Cardiac septum (tissue), 1 donor: ENCODE measurements at regions of chr3 and their contacts with region 1.

Region 1: DNA sequence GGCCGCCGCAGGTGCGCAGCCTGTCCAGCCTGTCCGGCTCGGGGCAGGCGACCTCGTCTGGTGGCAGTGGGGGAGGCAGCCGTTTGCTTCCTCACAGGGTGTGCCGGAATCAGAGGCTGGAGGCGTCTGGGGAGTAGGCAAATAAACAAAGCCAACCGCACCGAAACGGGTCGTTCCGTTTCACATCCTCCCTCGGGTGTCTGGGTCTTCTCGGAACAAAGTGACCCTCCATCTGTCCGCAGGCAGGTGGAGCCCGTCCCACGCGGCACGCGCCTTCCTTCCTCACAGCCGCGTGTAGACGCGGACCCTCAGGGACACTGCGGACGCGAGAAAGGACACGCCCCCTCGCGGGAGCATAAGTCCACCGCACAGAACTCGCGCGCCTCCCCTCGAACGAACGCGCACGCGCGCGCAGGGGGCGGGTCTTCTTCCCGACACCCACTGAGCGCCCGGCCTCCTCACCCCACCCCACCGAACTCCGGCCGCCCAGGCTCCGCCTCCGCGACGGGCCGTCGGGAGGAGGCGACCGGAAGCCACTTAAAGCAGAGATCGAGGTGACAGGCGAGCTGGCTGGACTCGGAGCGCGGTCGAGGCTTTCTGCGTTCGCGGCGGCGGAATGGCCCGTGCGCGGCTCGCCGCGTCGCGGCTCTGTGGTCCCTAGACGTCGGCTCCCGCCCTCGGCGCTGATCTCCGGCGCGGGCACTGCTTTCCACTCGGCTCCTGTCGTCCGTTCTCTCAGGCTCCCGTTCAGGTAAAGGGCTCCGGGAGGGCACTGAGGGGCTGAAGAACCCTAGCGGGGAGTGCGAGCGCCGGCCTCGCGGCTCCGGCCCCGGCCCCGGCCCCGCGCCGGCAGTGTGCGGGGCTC is at the start of gene TIPARP:
- DNase-seq: peak; percentile 100
- total RNA-seq, gene TIPARP: 17.9 TPM

Region 2: GRCh38 chr3:156465194-156465593 is 209.1 kb before region 1 on chr3:
- intact Hi-C with region 1: no loop called
- DNase-seq: no peak

Region 3: DNA sequence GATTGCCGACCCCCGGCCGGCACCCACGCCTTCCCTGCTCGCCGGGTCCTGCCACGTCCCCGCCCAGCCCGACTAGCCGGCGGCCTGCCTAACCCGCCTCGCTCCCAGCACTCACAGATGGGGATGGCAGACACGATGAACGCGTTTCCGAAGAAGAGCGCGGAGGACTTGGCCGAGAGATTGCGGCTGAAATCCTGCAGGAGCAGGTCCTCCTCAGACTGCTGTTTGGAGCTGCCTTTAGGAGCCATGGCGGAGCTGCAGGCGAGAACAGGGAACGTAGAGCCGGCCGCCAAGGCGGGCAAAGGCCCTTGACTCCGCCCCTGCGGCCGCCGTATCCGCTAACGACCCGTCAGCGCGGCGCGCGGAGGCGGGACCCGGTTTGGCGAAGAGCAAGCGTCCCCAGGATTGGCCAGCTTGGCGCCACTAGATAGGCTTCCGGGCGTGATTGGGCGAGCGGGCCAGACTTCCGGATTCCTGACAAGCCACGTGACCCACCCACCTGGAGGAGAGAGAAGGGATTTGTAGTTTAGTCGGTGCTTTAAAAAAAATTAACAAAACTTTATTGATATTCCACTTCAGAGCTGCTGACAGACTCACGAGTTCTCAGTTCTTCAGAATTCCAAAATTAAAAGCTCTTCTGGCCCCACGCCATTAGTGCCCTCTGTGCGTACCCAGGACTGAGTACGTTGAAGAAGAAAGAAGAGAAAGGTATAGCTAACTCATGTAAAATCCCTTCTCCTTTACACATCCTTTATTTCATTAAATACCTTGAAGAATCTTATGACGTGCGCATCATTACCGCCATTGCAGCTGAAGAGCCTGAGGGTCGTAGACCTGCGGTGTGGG is 119.2 kb before region 1 on chr3 and contains the start of gene SSR3:
- intact Hi-C with region 1: loop called (anchors 5 kb)
- DNase-seq: peak; percentile 100
- total RNA-seq, gene SSR3: 155 TPM

Region 4: DNA sequence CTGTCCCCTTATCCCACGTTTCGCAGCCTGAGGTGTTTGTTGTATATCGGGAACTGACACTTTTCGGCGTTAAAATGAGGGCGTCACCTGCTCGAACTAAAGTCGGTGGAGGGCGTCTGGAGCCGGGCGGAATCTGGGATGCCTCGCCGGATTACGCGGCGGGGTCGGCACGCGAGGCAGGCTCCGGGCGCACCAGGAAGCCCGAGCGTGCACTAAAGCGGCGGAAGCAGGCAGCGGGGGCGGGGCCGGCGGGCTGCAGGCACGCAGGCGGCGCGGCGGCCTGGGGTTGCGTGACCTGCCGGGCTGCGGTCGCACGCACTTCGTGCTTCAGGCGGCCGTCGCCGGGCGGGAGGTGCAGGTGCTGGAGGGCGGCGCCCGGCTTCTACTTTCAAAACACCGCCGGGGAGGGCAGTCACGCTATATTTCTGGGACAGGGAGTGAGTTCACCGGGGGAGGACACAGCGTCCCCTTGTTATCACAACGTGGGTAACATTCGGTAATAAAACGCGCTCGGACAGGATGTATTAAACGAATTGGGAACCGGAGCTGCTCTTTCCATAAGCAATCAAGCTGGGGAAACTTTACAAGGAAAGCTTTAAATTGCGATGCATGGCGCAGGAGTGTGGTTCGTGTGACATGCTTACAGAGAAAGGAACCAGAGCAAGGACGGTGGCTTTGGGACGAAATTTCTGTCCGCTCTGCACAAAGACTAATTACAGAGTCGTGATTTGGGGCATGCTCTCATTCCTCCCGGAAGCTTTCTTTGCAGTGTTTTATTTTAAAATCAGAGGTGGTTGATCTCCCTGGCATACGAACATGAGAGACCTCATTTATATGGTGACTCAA is 142.7 kb after region 1 on chr3:
- intact Hi-C with region 1: loop called (anchors 2 kb)
- DNase-seq: peak; percentile 93

Region 5: GRCh38 chr3:157081681-157082210 is 407.5 kb after region 1 on chr3:
- intact Hi-C with region 1: loop called (anchors 1 kb)
- DNase-seq: peak; percentile 93